ENCODE measurements at regions of chr2 and their contacts with region 1.

Region 1: DNA sequence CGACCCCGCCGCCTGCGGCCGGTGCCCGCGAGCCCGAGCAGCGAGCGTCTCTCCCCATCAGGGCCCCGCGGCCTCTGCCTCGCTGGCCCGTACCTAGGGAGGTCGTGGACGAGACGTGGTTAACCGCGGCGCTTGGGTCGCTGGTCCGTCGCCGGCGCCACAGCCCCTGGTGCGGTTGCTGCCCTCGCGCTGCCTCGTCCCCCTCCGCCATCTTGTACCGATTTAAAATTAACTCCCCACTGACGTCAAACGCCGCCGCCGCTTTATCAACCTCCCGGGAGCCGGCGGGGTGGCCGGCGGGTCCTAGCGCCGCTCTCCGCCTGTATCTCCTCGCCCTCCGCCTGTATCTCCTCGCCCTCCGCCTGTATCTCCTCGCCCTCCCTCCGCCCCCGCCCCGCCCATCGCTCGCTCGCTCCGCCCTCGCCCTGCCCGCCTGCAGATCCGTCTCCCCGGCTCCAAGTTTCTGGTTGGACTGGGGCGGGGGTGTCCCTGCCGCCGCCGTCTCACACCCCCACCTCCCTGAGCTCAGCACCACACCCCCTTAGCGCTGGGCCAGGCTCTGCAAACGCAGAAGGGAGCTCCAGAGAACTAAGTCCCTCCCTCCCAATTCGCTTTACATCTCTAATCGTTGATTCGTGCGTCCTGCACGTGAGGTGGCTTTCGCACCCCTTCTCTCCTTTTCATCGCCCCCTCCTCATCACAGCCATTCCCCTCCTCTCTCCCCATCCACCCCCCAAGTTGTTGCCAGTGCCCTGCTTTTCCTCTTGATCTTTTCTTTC is at the start of gene ATL2:
- DNase-seq: peak; percentile 83 to 94 (median 92)
- ATAC-seq: peak; percentile 92
- H3K4me3 ChIP-seq: peak within 1 kb of the TSS; percentile 75
- H3K4me3 Mint-ChIP-seq: peak within 1 kb of the TSS; percentile 93 to 100 (median 97)
- H3K27ac ChIP-seq: peak within 1 kb of the TSS; percentile 98
- H3K27ac Mint-ChIP-seq: peak within 1 kb of the TSS; percentile 87 to 99 (median 95)
- H3K4me1 ChIP-seq: peaks cover 28 to 30% of the 10 kb centered on the region in 2 donors
- H3K4me1 Mint-ChIP-seq: peaks cover 53 to 83% (median 68%) of the 10 kb centered on the region in 7 donors
- H3K27me3 ChIP-seq: no peaks in the 10 kb centered on the region
- H3K27me3 Mint-ChIP-seq: peaks cover 0 to 3% (median 0%) of the 10 kb centered on the region in 5 donors
- total RNA-seq, gene ATL2: 45.5 to 59.5 (median 53.0) TPM

Region 2: GRCh38 chr2:37083873-37084794 is 1293.1 kb before region 1 on chr2 and contains the starts of genes GPATCH11 and HEATR5B:
- CTCF ChIA-PET with region 1: no interaction called
- POLR2A ChIA-PET with region 1: no interaction called
- intact Hi-C with region 1: loop called in 1 of 2 experiments (anchors 2 kb)
- DNase-seq: peak; percentile 76 to 94 (median 92)
- ATAC-seq: peak; percentile 87
- H3K4me3 ChIP-seq: peak within 1 kb of the TSS; percentile 74
- H3K4me3 Mint-ChIP-seq: peak within 1 kb of the TSS in 1 of 10 donors; percentile 64
- H3K27ac ChIP-seq: peak within 1 kb of the TSS; percentile 85
- H3K27ac Mint-ChIP-seq: no peak within 1 kb of the TSS
- H3K4me1 ChIP-seq: peaks cover 35 to 45% of the 10 kb centered on the region in 2 donors
- H3K4me1 Mint-ChIP-seq: peaks cover 8 to 62% (median 50%) of the 10 kb centered on the region in 7 donors
- H3K27me3 ChIP-seq: no peaks in the 10 kb centered on the region
- H3K27me3 Mint-ChIP-seq: no peaks in the 10 kb centered on the region
- total RNA-seq, gene GPATCH11: 6.0 to 19.0 (median 11.1) TPM
- total RNA-seq, gene HEATR5B: 25.2 to 50.5 (median 39.3) TPM

Region 3: GRCh38 chr2:37776487-37776886 is 600.8 kb before region 1 on chr2:
- CTCF ChIA-PET with region 1: no interaction called
- POLR2A ChIA-PET with region 1: no interaction called
- intact Hi-C with region 1: no loop called
- DNase-seq: no peak
- ATAC-seq: no peak
- H3K4me3 ChIP-seq: no peak overlapping the region
- H3K4me3 Mint-ChIP-seq: no peak overlapping the region
- H3K27ac ChIP-seq: no peak overlapping the region
- H3K27ac Mint-ChIP-seq: no peak overlapping the region
- H3K4me1 ChIP-seq: no peaks in the 10 kb centered on the region
- H3K4me1 Mint-ChIP-seq: peaks cover 0 to 4% (median 0%) of the 10 kb centered on the region in 7 donors
- H3K27me3 ChIP-seq: no peaks in the 10 kb centered on the region
- H3K27me3 Mint-ChIP-seq: peaks cover 0 to 3% (median 0%) of the 10 kb centered on the region in 5 donors

Region 4: GRCh38 chr2:37982147-37982582 is 395.1 kb before region 1 on chr2:
- CTCF ChIA-PET with region 1: no interaction called
- POLR2A ChIA-PET with region 1: no interaction called
- intact Hi-C with region 1: loop called in 1 of 2 experiments (anchors 2 kb)
- DNase-seq: peak in 7 of 9 donors; percentile 33 to 61 (median 39)
- ATAC-seq: peak; percentile 52
- H3K4me3 ChIP-seq: no peak overlapping the region
- H3K4me3 Mint-ChIP-seq: peak overlapping the region in 1 of 10 donors; percentile 14
- H3K27ac ChIP-seq: no peak overlapping the region
- H3K27ac Mint-ChIP-seq: no peak overlapping the region
- H3K4me1 ChIP-seq: no peaks in the 10 kb centered on the region
- H3K4me1 Mint-ChIP-seq: peaks cover 0 to 8% (median 6%) of the 10 kb centered on the region in 7 donors
- H3K27me3 ChIP-seq: no peaks in the 10 kb centered on the region
- H3K27me3 Mint-ChIP-seq: peaks cover 0 to 14% (median 0%) of the 10 kb centered on the region in 5 donors

Region 5: GRCh38 chr2:38106405-38107094 is 270.7 kb before region 1 on chr2:
- CTCF ChIA-PET with region 1: no interaction called
- POLR2A ChIA-PET with region 1: no interaction called
- intact Hi-C with region 1: no loop called
- DNase-seq: no peak
- ATAC-seq: no peak
- H3K4me3 ChIP-seq: no peak overlapping the region
- H3K4me3 Mint-ChIP-seq: peak overlapping the region in 1 of 10 donors; percentile 43
- H3K27ac ChIP-seq: no peak overlapping the region
- H3K27ac Mint-ChIP-seq: peak overlapping the region in 1 of 9 donors; percentile 62
- H3K4me1 ChIP-seq: no peaks in the 10 kb centered on the region
- H3K4me1 Mint-ChIP-seq: peaks cover 0 to 22% (median 0%) of the 10 kb centered on the region in 7 donors
- H3K27me3 ChIP-seq: no peaks in the 10 kb centered on the region
- H3K27me3 Mint-ChIP-seq: peaks cover 13 to 34% (median 33%) of the 10 kb centered on the region in 5 donors

Region 6: GRCh38 chr2:38279201-38279600 is 98.0 kb before region 1 on chr2:
- CTCF ChIA-PET with region 1: no interaction called
- POLR2A ChIA-PET with region 1: no interaction called
- intact Hi-C with region 1: no loop called
- DNase-seq: no peak
- ATAC-seq: no peak
- H3K4me3 ChIP-seq: no peak overlapping the region
- H3K4me3 Mint-ChIP-seq: no peak overlapping the region
- H3K27ac ChIP-seq: no peak overlapping the region
- H3K27ac Mint-ChIP-seq: no peak overlapping the region
- H3K4me1 ChIP-seq: no peaks in the 10 kb centered on the region
- H3K4me1 Mint-ChIP-seq: peaks cover 2 to 7% (median 4%) of the 10 kb centered on the region in 7 donors
- H3K27me3 ChIP-seq: no peaks in the 10 kb centered on the region
- H3K27me3 Mint-ChIP-seq: peaks cover 0 to 12% (median 4%) of the 10 kb centered on the region in 5 donors

Region 7: GRCh38 chr2:38362232-38362631 is 15.0 kb before region 1 on chr2:
- CTCF ChIA-PET with region 1: interaction called, 4 read pairs
- POLR2A ChIA-PET with region 1: interaction called, 3 read pairs
- intact Hi-C with region 1: loop called in 1 of 2 experiments (anchors 1 kb)
- DNase-seq: no peak
- ATAC-seq: no peak
- H3K4me3 ChIP-seq: no peak overlapping the region
- H3K4me3 Mint-ChIP-seq: no peak overlapping the region
- H3K27ac ChIP-seq: no peak overlapping the region
- H3K27ac Mint-ChIP-seq: no peak overlapping the region
- H3K4me1 ChIP-seq: peaks cover 0 to 3% of the 10 kb centered on the region in 2 donors
- H3K4me1 Mint-ChIP-seq: peaks cover 18 to 63% (median 50%) of the 10 kb centered on the region in 7 donors
- H3K27me3 ChIP-seq: no peaks in the 10 kb centered on the region
- H3K27me3 Mint-ChIP-seq: no peaks in the 10 kb centered on the region

Region 8: DNA sequence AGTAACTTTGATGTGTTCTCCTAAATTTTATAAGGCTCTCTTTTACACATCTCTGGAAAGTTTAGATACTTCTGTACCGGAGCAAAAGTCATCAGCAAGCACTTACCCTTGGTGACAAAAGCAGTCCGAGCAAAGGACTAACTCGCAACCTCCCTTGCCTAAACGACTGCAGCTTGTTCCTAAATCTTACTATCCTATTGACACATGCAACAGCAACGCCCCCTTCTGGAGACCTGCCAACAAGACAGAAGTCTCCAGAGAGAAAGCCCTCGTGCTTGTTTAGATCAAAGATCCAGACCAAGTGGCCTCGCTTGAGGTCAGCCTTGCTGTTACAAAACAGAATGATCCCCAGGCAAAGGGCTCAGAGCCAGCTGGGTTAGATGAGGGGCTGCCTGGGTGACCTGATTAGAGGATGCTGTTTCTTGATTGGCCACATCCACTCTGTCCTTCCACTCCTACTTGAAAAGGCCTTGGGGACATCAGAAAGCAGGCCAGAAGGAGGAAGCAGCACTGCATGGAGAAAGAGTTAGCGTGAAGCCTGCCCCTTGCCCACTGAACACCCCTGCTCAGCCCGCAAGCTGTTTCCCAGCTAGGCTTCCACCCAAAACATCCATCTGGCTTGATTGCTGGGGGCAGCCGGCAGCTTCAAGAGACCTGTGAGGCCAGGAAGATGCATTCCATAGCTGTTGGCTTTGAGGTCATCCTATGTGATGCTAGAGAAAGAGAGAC is 131.2 kb after region 1 on chr2:
- CTCF ChIA-PET with region 1: no interaction called
- POLR2A ChIA-PET with region 1: no interaction called
- intact Hi-C with region 1: loop called (anchors 1 kb)
- DNase-seq: peak; percentile 49 to 76 (median 67)
- ATAC-seq: peak; percentile 84
- H3K4me3 ChIP-seq: no peak overlapping the region
- H3K4me3 Mint-ChIP-seq: no peak overlapping the region
- H3K27ac ChIP-seq: no peak overlapping the region
- H3K27ac Mint-ChIP-seq: peak overlapping the region in 2 of 9 donors; percentile 15 to 19
- H3K4me1 ChIP-seq: no peaks in the 10 kb centered on the region
- H3K4me1 Mint-ChIP-seq: peaks cover 0 to 19% (median 0%) of the 10 kb centered on the region in 7 donors
- H3K27me3 ChIP-seq: no peaks in the 10 kb centered on the region
- H3K27me3 Mint-ChIP-seq: peaks cover 0 to 14% (median 5%) of the 10 kb centered on the region in 5 donors

Region 9: GRCh38 chr2:38750891-38751595 is 373.8 kb after region 1 on chr2 and contains the start of gene SRSF7:
- CTCF ChIA-PET with region 1: interaction called, 4 read pairs
- POLR2A ChIA-PET with region 1: interaction called, 22 read pairs
- intact Hi-C with region 1: loop called (anchors 1 kb)
- DNase-seq: peak; percentile 95 to 98 (median 97)
- ATAC-seq: peak; percentile 87
- H3K4me3 ChIP-seq: peak within 1 kb of the TSS; percentile 96
- H3K4me3 Mint-ChIP-seq: peak within 1 kb of the TSS; percentile 95 to 100 (median 99)
- H3K27ac ChIP-seq: peak within 1 kb of the TSS; percentile 95
- H3K27ac Mint-ChIP-seq: peak within 1 kb of the TSS; percentile 98 to 100 (median 100)
- H3K4me1 ChIP-seq: peaks cover 31 to 41% of the 10 kb centered on the region in 2 donors
- H3K4me1 Mint-ChIP-seq: peaks cover 40 to 72% (median 58%) of the 10 kb centered on the region in 7 donors
- H3K27me3 ChIP-seq: no peaks in the 10 kb centered on the region
- H3K27me3 Mint-ChIP-seq: peaks cover 0 to 5% (median 0%) of the 10 kb centered on the region in 5 donors
- total RNA-seq, gene SRSF7: 259 to 503 (median 310) TPM

Measured in naive thymus-derived CD4-positive, alpha-beta T cell (primary cell).